ENCODE measurements at regions of chr10 and their contacts with region 1.

Region 1: DNA sequence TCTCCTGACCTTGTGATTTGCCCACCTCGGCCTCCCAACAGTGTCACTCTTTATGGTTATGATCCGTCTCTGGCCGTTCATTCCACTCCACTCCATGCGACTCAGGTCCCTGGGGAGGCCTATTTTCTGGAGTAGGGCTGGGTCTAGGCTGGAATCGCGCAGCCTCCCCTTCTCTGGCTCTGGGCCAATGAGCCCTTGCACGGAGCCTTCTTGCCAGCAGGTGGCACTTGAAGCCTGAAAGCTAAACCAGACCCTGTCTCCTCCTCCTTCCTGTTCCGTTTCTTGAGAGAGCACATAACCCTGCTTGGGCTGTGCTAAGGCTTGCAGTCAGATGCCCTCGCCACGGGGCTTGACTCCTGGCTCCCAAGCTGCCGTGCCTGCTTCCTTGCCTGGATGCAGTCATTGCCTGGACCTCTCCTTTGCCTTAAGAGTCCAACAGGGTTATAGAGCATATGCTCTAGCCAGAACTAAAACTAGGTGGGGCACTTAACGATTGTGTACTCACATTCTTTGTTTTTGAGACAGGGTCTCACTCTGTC is 9.6 kb upstream of the DNAJB12 start:
- DNase-seq: peak; percentile 87 to 93
- ATAC-seq: peak; percentile 88 to 97 (median 96)
- H3K4me3 ChIP-seq: peak overlapping the region in 7 of 10 donors; percentile 9 to 34 (median 17)
- H3K27ac ChIP-seq: peak overlapping the region in 7 of 10 donors; percentile 13 to 75 (median 60)
- H3K4me1 ChIP-seq: peaks cover 0 to 14% (median 8%) of the 10 kb centered on the region in 9 donors
- H3K27me3 ChIP-seq: no peaks in the 10 kb centered on the region
- CTCF ChIP-seq: peak; percentile 82 to 98 (median 92)

Region 2: GRCh38 chr10:72567884-72568640 is 203.8 kb after region 1 on chr10:
- intact Hi-C with region 1: loop called in 3 of 10 experiments (anchors 10 kb)
- DNase-seq: no peak
- ATAC-seq: no peak
- H3K4me3 ChIP-seq: no peak overlapping the region
- H3K27ac ChIP-seq: peak overlapping the region in 4 of 10 donors; percentile 6 to 41 (median 16)
- H3K4me1 ChIP-seq: peaks cover 0 to 24% (median 0%) of the 10 kb centered on the region in 9 donors
- H3K27me3 ChIP-seq: no peaks in the 10 kb centered on the region
- CTCF ChIP-seq: peak in 6 of 9 donors; percentile 31 to 48 (median 41)

Region 3: DNA sequence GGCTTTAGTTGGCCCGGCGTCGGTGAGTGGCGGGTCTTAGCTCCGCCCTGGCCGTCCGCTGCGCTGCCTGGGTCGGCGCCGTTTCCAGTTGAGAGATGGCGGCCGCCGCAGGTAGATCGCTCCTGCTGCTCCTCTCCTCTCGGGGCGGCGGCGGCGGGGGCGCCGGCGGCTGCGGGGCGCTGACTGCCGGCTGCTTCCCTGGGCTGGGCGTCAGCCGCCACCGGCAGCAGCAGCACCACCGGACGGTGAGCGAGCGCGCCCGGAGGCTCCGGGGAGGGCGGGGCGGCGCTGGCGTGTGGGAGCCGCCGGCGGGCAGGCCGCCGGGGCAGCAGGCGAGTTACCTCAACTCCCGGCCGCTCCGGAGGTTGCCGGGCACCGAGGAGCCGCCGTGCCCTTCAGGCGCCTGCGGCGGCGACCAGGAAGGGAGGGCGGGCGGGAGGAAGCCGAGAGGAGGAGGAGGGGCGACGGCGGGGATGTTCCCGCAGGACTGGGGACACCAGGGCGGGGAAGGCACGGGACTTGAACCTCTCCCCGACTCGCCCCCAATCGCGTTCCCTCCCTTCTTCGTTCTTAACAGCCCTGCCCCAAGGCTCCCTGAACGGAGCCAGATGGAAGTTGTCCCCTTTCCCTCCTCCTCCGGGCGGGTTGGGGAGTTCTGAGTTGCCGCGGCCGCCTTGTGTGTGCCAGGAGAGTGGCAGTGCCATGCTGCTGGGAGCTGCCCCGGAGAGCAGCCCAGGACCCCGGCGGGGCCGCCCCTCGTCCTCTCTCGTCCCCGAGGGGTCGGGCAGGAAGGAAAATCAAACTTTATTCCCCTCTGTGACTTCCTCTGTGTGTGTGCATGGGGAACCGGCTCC is 328.0 kb after region 1 on chr10 and contains the start of gene MCU:
- intact Hi-C with region 1: loop called in 5 of 10 experiments (anchors 1 to 10 kb)
- DNase-seq: peak; percentile 93 to 96
- ATAC-seq: peak; percentile 97 to 99 (median 98)
- H3K4me3 ChIP-seq: peak within 1 kb of the TSS; percentile 43 to 91 (median 84)
- H3K27ac ChIP-seq: peak within 1 kb of the TSS; percentile 83 to 99 (median 94)
- H3K4me1 ChIP-seq: peaks cover 0 to 39% (median 27%) of the 10 kb centered on the region in 9 donors
- H3K27me3 ChIP-seq: no peaks in the 10 kb centered on the region
- CTCF ChIP-seq: no peak
- total RNA-seq, gene MCU: 12.0 to 19.0 (median 15.2) TPM

Region 4: DNA sequence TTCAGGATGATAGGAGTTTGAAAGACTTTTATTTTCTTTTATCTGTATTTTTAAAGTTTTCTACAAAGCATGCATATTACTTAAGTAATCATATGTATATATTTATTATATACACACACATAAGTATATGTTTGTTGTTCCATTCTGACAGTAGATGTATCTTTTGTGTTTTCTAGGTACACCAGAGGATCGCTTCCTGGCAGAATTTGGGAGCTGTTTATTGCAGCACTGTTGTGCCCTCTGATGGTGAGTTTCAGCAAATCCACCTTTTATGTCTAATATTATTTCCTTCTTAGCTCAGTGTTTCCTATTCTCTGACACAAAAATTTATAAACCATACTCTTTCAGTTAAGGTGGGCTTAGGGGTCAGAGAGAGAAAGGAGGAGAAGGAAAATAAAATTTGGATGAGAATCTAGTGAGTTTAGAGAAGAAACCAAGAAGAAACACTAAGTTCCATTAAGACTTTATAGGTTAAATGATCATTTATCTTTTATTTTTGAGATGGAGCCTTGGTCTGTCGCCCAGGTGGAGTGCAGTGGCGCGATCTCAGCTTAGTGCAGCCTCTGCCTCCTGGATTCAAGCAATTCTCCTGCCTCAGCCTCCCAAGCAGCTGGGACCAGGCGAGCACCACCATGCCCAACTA is 470.0 kb after region 1 on chr10:
- intact Hi-C with region 1: loop called (anchors 1 to 5 kb)
- DNase-seq: peak in 1 of 2 donors; percentile 64
- ATAC-seq: peak in 7 of 8 donors; percentile 75 to 91 (median 83)
- H3K4me3 ChIP-seq: no peak overlapping the region
- H3K27ac ChIP-seq: no peak overlapping the region
- H3K4me1 ChIP-seq: peaks cover 0 to 43% (median 18%) of the 10 kb centered on the region in 9 donors
- H3K27me3 ChIP-seq: no peaks in the 10 kb centered on the region
- CTCF ChIP-seq: peak; percentile 44 to 84 (median 71)

Region 5: DNA sequence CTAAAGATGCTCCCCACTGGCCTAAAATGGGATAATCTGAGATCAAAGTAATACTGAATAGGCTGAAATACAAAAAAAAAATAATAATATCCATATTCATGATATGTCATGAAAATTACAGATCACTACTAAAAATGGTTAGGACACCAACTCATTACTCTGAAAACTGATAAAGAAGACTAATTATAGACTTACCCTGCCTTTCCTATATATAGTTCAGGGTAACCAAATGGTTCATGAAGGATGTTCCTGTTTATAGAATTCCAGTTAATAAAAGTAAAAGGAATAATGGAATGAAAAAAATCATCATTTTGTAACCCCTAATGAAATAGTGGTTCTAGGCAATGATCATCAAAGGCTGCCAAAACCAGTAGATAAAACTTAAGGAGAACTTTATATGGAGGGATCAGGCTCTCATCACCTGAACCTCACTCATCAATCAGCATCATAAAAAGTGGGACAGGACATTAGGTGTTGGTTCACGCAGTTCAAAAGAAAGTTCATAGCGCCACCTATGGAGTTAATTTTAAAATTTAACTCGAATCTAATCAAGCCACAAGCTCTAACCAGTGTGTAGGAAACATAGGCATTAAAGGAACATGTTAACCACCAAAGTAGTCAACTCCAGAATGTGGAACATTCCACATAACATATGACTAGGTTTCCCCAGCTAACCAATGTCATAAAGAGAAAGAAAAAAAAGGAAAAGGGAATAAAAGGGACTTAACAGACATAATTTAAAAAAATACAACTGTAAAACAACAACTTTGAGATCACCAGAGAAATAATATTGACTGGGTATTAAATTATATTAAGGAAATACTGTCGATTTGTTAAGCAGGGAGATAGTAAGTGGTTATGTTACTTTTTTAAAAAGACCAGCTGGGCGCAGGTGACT is 696.7 kb after region 1 on chr10:
- intact Hi-C with region 1: loop called in 2 of 10 experiments (anchors 5 to 10 kb)
- DNase-seq: no peak
- ATAC-seq: peak in 6 of 8 donors; percentile 38 to 76 (median 49)
- H3K4me3 ChIP-seq: no peak overlapping the region
- H3K27ac ChIP-seq: peak overlapping the region in 8 of 10 donors; percentile 3 to 73 (median 52)
- H3K4me1 ChIP-seq: peaks cover 0 to 22% (median 10%) of the 10 kb centered on the region in 9 donors
- H3K27me3 ChIP-seq: no peaks in the 10 kb centered on the region
- CTCF ChIP-seq: peak in 6 of 9 donors; percentile 34 to 54 (median 46)

Region 6: GRCh38 chr10:73167783-73168464 is 803.6 kb after region 1 on chr10 and contains the starts of genes ECD and FAM149B1:
- intact Hi-C with region 1: loop called in 1 of 10 experiments (anchors 10 kb)
- DNase-seq: peak; percentile 92 to 96
- ATAC-seq: peak; percentile 97 to 99 (median 99)
- H3K4me3 ChIP-seq: peak within 1 kb of the TSS; percentile 71 to 95 (median 86)
- H3K27ac ChIP-seq: peak within 1 kb of the TSS; percentile 87 to 98 (median 94)
- H3K4me1 ChIP-seq: peaks cover 0 to 52% (median 43%) of the 10 kb centered on the region in 9 donors
- H3K27me3 ChIP-seq: no peaks in the 10 kb centered on the region
- CTCF ChIP-seq: peak in 3 of 9 donors; percentile 25 to 39 (median 36)
- total RNA-seq, gene ECD: 14.0 to 22.9 (median 19.0) TPM
- total RNA-seq, gene FAM149B1: 12.2 to 19.7 (median 16.7) TPM

Measured in heart right ventricle (tissue), 16 donors.